MCF 10A (cell line): ENCODE measurements at regions of chr9 and their contacts with region 1.

Region 1: DNA sequence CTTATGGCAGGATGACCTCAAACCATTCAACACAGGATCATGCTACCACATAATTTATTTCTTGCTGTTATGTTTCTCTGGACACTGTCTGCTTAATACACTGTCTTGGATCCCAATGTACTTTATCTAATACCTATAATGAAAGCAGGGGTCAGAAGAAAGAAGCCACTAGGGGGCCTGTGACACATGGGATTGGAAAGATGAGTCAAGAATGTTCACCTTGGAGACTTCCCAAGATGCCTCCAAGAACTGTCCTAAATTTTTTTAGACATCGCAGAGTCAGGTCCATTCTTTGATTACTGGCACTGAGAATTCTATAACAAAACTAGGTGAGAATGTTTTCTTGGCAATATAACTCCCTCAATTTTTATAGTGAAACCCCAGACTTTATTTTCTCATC is 305.8 kb upstream of the SMARCA2 start:
- DNase-seq: peak; percentile 45
- H3K4me3 Mint-ChIP-seq: no peak overlapping the region
- H3K27ac Mint-ChIP-seq: no peak overlapping the region
- H3K4me1 Mint-ChIP-seq: peaks cover 17% of the 10 kb centered on the region
- H3K27me3 Mint-ChIP-seq: no peaks in the 10 kb centered on the region
- CTCF ChIP-seq: peak; percentile 16

Region 2: GRCh38 chr9:1721196-1721595 is 11.9 kb after region 1 on chr9:
- CTCF ChIA-PET with region 1: interaction called, 7 read pairs
- POLR2A ChIA-PET with region 1: interaction called, 10 read pairs
- intact Hi-C with region 1: no loop called
- DNase-seq: no peak
- H3K4me3 Mint-ChIP-seq: no peak overlapping the region
- H3K27ac Mint-ChIP-seq: no peak overlapping the region
- H3K4me1 Mint-ChIP-seq: no peaks in the 10 kb centered on the region
- H3K27me3 Mint-ChIP-seq: peaks cover 6% of the 10 kb centered on the region
- CTCF ChIP-seq: no peak